ENCODE measurements at regions of chr22 and their contacts with region 1.

Region 1: DNA sequence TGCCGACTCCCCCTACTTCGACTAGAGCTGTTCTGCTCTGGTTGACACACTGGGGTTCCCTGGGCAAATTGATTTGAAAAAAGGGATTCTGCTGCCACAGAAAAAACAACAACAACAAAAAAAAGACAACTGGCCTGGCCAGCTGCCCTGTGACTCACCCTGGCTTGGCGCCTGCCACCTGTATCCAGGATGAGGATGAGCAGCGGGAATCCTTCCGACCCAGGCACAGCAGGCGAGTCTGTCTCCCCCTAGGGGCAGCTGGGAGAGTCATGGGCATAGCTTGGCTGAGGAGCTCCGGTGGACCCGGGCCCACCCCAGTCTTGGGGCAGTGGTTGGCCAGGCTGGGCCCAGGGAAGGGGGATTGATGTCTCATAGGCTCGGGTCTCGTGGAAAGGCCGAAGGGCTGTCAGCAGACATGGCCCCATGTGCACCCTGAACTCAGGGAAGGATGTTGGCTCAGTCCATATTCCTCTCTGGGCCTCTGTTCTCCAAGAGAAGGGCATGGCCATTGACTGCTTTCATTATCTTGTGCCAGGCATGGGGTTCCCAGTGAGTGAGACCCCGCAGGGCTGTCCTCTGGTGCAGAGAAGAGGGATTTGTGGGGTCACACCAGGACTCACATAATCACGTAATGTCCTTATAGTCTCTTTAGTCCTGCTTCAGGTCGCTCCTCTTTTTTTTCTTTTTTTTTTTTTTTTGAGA is 10.4 kb upstream of the SUN2 start:
- DNase-seq: peak; percentile 41
- H3K4me3 Mint-ChIP-seq: no peak overlapping the region
- H3K27ac Mint-ChIP-seq: no peak overlapping the region
- H3K4me1 Mint-ChIP-seq: peaks cover 8% of the 10 kb centered on the region
- H3K27me3 Mint-ChIP-seq: no peaks in the 10 kb centered on the region

Region 2: DNA sequence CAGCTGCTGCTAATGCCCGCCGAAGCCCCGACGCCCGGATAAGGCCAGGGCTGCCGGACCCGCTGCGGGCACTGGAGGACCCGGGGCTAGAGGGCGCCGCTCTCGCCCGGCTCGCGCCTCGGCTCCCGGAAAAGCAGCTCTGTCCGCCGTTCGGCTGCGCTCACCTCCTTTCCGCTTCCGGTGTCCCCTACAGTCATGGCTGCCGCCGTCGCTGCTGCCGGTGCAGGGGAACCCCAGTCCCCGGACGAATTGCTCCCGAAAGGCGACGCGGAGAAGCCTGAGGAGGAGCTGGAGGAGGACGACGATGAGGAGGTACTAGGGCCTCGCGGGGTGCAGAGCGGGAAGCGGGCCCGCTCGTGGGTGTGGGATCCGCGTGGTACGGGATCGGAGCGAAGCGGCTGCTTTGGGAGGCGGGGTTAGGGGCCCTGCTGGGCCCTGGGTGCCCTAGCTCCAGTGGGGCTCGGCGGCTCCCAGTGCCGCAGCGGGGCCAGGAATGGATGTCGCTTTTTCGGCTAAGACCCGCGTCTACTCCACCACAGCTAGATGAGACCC is 84.4 kb before region 1 on chr22 and contains the start of gene TOMM22:
- CTCF ChIA-PET with region 1: interaction called, 11 read pairs
- POLR2A ChIA-PET with region 1: interaction called, 4 read pairs
- DNase-seq: peak; percentile 85
- H3K4me3 Mint-ChIP-seq: peak within 1 kb of the TSS; percentile 100
- H3K27ac Mint-ChIP-seq: peak within 1 kb of the TSS; percentile 95
- H3K4me1 Mint-ChIP-seq: peaks cover 25% of the 10 kb centered on the region
- H3K27me3 Mint-ChIP-seq: no peaks in the 10 kb centered on the region
- total RNA-seq, gene TOMM22: 60.4 to 63.0 TPM

Region 3: DNA sequence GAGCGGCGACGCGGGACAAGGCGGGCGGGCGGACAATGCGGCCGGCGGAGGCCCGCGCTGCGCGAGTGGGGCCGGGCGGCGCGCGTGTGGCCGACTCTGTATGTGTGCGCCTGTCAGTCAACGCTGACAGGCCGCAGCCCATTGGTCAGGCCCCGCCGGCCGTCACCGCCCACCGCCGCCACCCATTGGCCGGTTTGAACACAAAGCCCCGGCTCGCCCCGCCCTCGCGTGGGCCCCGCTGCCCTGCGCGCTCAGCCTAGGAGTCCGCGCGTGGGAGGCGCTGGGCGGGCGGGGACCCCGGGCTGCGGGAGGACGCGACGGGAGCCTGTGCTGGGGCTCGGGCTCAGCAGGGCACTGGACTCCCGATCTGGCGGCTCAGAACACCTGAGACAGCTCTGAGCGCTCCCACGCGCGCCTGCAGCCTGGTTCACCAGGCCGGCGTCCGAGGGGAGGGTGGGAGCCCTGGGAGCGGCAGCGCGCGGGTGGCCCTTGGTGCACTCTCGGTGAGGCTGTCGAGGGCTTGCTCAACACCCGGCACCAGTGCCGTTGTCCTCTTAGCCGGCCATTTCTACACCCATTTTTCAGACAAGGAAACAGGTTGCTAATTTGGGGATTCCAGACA is 10.2 kb before region 1 on chr22 and contains the start of gene SUN2:
- CTCF ChIA-PET with region 1: interaction called, 30 read pairs
- POLR2A ChIA-PET with region 1: interaction called, 17 read pairs
- DNase-seq: peak; percentile 95
- H3K4me3 Mint-ChIP-seq: peak within 1 kb of the TSS; percentile 95
- H3K27ac Mint-ChIP-seq: peak within 1 kb of the TSS; percentile 100
- H3K4me1 Mint-ChIP-seq: peaks cover 53% of the 10 kb centered on the region
- H3K27me3 Mint-ChIP-seq: no peaks in the 10 kb centered on the region
- total RNA-seq, gene SUN2: 498 to 500 TPM

Region 4: GRCh38 chr22:38792833-38793232 is 26.6 kb after region 1 on chr22:
- CTCF ChIA-PET with region 1: interaction called, 14 read pairs
- POLR2A ChIA-PET with region 1: no interaction called
- DNase-seq: no peak
- H3K4me3 Mint-ChIP-seq: peak overlapping the region; percentile 77
- H3K27ac Mint-ChIP-seq: peak overlapping the region; percentile 21
- H3K4me1 Mint-ChIP-seq: peaks cover 21% of the 10 kb centered on the region
- H3K27me3 Mint-ChIP-seq: peaks cover 17% of the 10 kb centered on the region

Region 5: GRCh38 chr22:38831166-38831945 is 65.1 kb after region 1 on chr22:
- CTCF ChIA-PET with region 1: no interaction called
- POLR2A ChIA-PET with region 1: no interaction called
- DNase-seq: no peak
- H3K4me3 Mint-ChIP-seq: no peak overlapping the region
- H3K27ac Mint-ChIP-seq: no peak overlapping the region
- H3K4me1 Mint-ChIP-seq: no peaks in the 10 kb centered on the region
- H3K27me3 Mint-ChIP-seq: no peaks in the 10 kb centered on the region

Region 6: GRCh38 chr22:38843201-38843715 is 77.0 kb after region 1 on chr22:
- CTCF ChIA-PET with region 1: interaction called, 18 read pairs
- POLR2A ChIA-PET with region 1: interaction called, 8 read pairs
- DNase-seq: peak; percentile 59
- H3K4me3 Mint-ChIP-seq: no peak overlapping the region
- H3K27ac Mint-ChIP-seq: no peak overlapping the region
- H3K4me1 Mint-ChIP-seq: peaks cover 14% of the 10 kb centered on the region
- H3K27me3 Mint-ChIP-seq: peaks cover 53% of the 10 kb centered on the region

Region 7: GRCh38 chr22:38879961-38880360 is 113.7 kb after region 1 on chr22:
- CTCF ChIA-PET with region 1: no interaction called
- POLR2A ChIA-PET with region 1: no interaction called
- DNase-seq: no peak
- H3K4me3 Mint-ChIP-seq: no peak overlapping the region
- H3K27ac Mint-ChIP-seq: no peak overlapping the region
- H3K4me1 Mint-ChIP-seq: peaks cover 13% of the 10 kb centered on the region
- H3K27me3 Mint-ChIP-seq: peaks cover 21% of the 10 kb centered on the region

Region 8: DNA sequence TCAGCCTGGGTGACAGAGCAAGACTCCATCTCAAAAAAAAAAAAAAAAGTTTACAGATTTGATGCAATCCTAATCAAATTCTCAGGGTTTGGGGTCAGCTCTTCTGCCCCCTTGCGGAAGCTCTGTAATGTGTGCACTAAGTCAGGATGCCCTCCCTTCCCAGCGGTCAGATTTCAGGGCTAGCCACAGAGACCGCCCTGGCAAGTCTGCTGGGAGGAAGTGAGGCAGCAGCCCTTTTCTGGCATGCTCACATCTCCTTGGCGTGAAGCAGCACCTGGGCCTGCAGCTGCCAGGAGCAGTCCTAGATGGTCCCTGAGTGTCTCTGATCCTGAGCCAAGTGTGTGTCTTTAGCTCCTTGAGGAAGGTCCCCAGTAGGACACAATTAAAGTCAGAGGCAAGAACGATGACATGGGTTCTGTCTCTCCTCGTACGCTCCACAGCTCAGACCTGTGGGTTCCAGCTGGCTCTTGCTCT is 237.0 kb after region 1 on chr22:
- CTCF ChIA-PET with region 1: interaction called, 27 read pairs
- POLR2A ChIA-PET with region 1: interaction called, 3 read pairs
- DNase-seq: peak; percentile 88
- H3K4me3 Mint-ChIP-seq: no peak overlapping the region
- H3K27ac Mint-ChIP-seq: peak overlapping the region; percentile 4
- H3K4me1 Mint-ChIP-seq: peaks cover 18% of the 10 kb centered on the region
- H3K27me3 Mint-ChIP-seq: peaks cover 6% of the 10 kb centered on the region